Activated CD4-positive, alpha-beta T cell treated with anti-CD3 and anti-CD28 coated beads for 36 hours (primary cell): ENCODE measurements at regions of chr6 and their contacts with region 1.

Region 1: DNA sequence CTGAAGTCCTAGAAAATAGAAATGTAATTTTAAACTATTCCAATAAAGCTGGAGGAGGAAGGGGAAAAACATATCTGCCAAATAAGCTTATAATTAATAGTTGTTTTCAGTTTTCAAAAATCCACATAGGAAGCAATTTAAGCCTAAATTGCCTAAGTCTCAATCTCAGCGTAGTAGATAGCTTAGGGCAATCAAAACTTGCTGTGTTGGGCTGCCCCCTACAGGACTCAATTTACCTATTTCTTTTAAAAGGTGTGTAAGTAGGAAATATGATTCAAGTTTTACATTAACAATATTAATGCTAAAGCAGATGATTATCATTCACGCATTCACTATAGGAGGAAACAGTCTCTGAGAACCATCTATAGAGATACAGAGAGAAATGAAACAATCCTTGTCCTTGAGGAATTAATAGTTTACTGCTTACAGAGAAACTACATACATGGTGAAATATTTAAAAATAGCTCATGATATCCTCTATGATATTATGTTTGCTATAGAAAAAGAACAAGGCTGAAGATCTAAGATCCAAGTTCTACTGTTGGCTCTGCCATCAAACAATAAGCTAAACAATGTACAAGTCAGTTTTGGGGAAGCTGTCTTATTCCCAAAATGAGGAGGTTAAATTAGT is 102.1 kb downstream of the ATG5 start:
- DNase-seq: peak; percentile 83
- ATAC-seq: peak; percentile 80
- H3K4me3 Mint-ChIP-seq: no peak overlapping the region
- H3K27ac Mint-ChIP-seq: no peak overlapping the region
- H3K4me1 Mint-ChIP-seq: peaks cover 13% of the 10 kb centered on the region
- H3K27me3 Mint-ChIP-seq: no peaks in the 10 kb centered on the region

Region 2: GRCh38 chr6:105431226-105431625 is 792.2 kb before region 1 on chr6:
- CTCF ChIA-PET with region 1: interaction called, 16 read pairs
- POLR2A ChIA-PET with region 1: no interaction called
- intact Hi-C with region 1: loop called (anchors 1 to 5 kb)
- DNase-seq: no peak
- ATAC-seq: no peak
- H3K4me3 Mint-ChIP-seq: no peak overlapping the region
- H3K27ac Mint-ChIP-seq: no peak overlapping the region
- H3K4me1 Mint-ChIP-seq: no peaks in the 10 kb centered on the region
- H3K27me3 Mint-ChIP-seq: peaks cover 6% of the 10 kb centered on the region

Region 3: GRCh38 chr6:105733565-105734162 is 489.8 kb before region 1 on chr6:
- CTCF ChIA-PET with region 1: interaction called, 10 read pairs
- POLR2A ChIA-PET with region 1: no interaction called
- intact Hi-C with region 1: loop called (anchors 1 kb)
- DNase-seq: no peak
- ATAC-seq: no peak
- H3K4me3 Mint-ChIP-seq: no peak overlapping the region
- H3K27ac Mint-ChIP-seq: no peak overlapping the region
- H3K4me1 Mint-ChIP-seq: no peaks in the 10 kb centered on the region
- H3K27me3 Mint-ChIP-seq: peaks cover 2% of the 10 kb centered on the region

Region 4: GRCh38 chr6:105992315-105992961 is 231.0 kb before region 1 on chr6:
- CTCF ChIA-PET with region 1: interaction called, 42 read pairs
- POLR2A ChIA-PET with region 1: no interaction called
- intact Hi-C with region 1: loop called (anchors 5 to 10 kb)
- DNase-seq: peak; percentile 94
- ATAC-seq: peak; percentile 93
- H3K4me3 Mint-ChIP-seq: peak overlapping the region; percentile 88
- H3K27ac Mint-ChIP-seq: peak overlapping the region; percentile 91
- H3K4me1 Mint-ChIP-seq: peaks cover 32% of the 10 kb centered on the region
- H3K27me3 Mint-ChIP-seq: peaks cover 61% of the 10 kb centered on the region

Region 5: DNA sequence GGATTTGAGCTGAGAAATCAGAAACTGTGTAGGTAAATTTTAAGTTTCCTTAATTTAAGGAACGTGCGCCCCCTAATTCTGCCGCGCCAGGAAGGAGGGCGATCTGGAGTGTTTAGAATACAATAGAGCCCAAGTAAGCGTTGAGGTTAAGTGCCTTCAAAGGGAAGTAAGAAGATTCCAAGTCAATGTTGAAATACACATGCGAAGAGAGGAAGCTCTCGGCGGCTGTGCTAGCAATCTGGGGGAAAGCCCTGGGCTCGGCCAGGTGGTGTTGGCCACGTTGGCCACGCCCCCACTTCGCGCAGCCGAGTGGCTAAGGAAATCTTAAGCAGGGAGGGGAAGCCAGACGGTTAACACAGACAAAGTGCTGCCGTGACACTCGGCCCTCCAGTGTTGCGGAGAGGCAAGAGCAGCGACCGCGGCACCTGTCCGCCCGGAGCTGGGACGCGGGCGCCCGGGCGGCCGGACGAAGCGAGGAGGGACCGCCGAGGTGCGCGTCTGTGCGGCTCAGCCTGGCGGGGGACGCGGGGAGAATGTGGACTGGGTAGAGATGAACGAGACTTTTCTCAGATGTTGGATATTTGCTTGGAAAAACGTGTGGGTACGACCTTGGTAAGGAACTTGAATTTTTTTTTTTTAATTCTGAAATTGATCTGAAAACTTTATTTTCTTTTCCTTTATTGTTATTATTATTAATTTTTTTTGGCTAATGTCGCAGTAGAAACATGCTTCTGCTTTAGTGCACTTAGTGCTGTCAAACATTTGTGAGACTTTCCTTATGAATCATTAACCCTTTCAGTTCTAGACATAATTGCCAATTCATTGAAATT is 137.2 kb before region 1 on chr6 and contains the start of gene PRDM1:
- CTCF ChIA-PET with region 1: interaction called, 19 read pairs
- POLR2A ChIA-PET with region 1: no interaction called
- intact Hi-C with region 1: loop called in 1 of 2 experiments (anchors 1 kb)
- DNase-seq: peak; percentile 83
- ATAC-seq: peak; percentile 66
- H3K4me3 Mint-ChIP-seq: peak within 1 kb of the TSS; percentile 76
- H3K27ac Mint-ChIP-seq: peak within 1 kb of the TSS; percentile 84
- H3K4me1 Mint-ChIP-seq: peaks cover 71% of the 10 kb centered on the region
- H3K27me3 Mint-ChIP-seq: peaks cover 49% of the 10 kb centered on the region
- total RNA-seq, gene PRDM1: 20.1 to 35.6 TPM

Region 6: DNA sequence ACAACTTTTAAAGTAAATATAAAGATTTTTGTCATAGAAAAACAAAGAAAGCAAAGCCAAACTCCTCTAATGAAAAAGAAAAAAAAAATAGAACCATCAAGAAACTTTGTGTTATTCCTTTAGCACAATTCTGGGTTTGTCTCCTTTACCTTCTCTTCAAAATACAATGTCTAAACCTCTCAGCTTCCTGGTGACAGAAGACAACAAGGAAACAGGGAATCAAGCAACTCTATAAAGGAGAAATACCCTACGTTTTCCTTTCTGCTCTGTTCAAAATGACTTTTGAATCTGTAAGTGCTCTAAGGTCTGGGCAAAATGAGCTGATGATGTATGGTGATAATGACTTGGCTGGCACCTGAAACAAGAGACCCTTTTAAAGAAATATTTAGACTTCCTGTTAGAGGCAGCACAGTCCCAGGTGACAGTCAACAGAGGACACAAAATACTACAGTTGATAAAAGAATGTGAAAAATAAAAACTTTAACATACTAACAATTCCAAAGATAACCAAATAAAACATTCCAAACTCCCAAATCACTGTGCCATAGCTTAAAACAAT is 35.9 kb before region 1 on chr6:
- CTCF ChIA-PET with region 1: interaction called, 15 read pairs
- POLR2A ChIA-PET with region 1: no interaction called
- intact Hi-C with region 1: no loop called
- DNase-seq: no peak
- ATAC-seq: no peak
- H3K4me3 Mint-ChIP-seq: no peak overlapping the region
- H3K27ac Mint-ChIP-seq: peak overlapping the region; percentile 55
- H3K4me1 Mint-ChIP-seq: peaks cover 56% of the 10 kb centered on the region
- H3K27me3 Mint-ChIP-seq: no peaks in the 10 kb centered on the region